Mammary epithelial cell (primary cell): ENCODE measurements at regions of chr17 and their contacts with region 1.

Region 1: GRCh38 chr17:31147507-31148202 is 52.9 kb downstream of the NF1 start:
- DNase-seq: no peak
- H3K4me3 ChIP-seq: no peak overlapping the region
- H3K27ac ChIP-seq: no peak overlapping the region
- H3K4me1 ChIP-seq: no peaks in the 10 kb centered on the region
- H3K27me3 ChIP-seq: no peaks in the 10 kb centered on the region
- CTCF ChIP-seq: no peak

Region 2: GRCh38 chr17:30942308-30943079 is 205.2 kb before region 1 on chr17:
- CTCF ChIA-PET with region 1: no interaction called
- dilution Hi-C with region 1: no loop called
- in situ Hi-C with region 1: no loop called
- intact Hi-C with region 1: no loop called
- DNase-seq: no peak
- H3K4me3 ChIP-seq: no peak overlapping the region
- H3K27ac ChIP-seq: no peak overlapping the region
- H3K4me1 ChIP-seq: no peaks in the 10 kb centered on the region
- H3K27me3 ChIP-seq: no peaks in the 10 kb centered on the region
- CTCF ChIP-seq: no peak

Region 3: GRCh38 chr17:31085563-31085962 is 62.1 kb before region 1 on chr17:
- CTCF ChIA-PET with region 1: no interaction called
- dilution Hi-C with region 1: loop called (anchors 10 kb)
- in situ Hi-C with region 1: no loop called
- intact Hi-C with region 1: no loop called
- DNase-seq: peak; percentile 55
- H3K4me3 ChIP-seq: no peak overlapping the region
- H3K27ac ChIP-seq: no peak overlapping the region
- H3K4me1 ChIP-seq: no peaks in the 10 kb centered on the region
- H3K27me3 ChIP-seq: no peaks in the 10 kb centered on the region
- CTCF ChIP-seq: no peak

Region 4: GRCh38 chr17:31112001-31112661 is 35.5 kb before region 1 on chr17:
- CTCF ChIA-PET with region 1: no interaction called
- dilution Hi-C with region 1: no loop called
- in situ Hi-C with region 1: no loop called
- intact Hi-C with region 1: loop called (anchors 5 kb)
- DNase-seq: peak; percentile 46
- H3K4me3 ChIP-seq: no peak overlapping the region
- H3K27ac ChIP-seq: no peak overlapping the region
- H3K4me1 ChIP-seq: peaks cover 6% of the 10 kb centered on the region
- H3K27me3 ChIP-seq: no peaks in the 10 kb centered on the region
- CTCF ChIP-seq: no peak

Region 5: DNA sequence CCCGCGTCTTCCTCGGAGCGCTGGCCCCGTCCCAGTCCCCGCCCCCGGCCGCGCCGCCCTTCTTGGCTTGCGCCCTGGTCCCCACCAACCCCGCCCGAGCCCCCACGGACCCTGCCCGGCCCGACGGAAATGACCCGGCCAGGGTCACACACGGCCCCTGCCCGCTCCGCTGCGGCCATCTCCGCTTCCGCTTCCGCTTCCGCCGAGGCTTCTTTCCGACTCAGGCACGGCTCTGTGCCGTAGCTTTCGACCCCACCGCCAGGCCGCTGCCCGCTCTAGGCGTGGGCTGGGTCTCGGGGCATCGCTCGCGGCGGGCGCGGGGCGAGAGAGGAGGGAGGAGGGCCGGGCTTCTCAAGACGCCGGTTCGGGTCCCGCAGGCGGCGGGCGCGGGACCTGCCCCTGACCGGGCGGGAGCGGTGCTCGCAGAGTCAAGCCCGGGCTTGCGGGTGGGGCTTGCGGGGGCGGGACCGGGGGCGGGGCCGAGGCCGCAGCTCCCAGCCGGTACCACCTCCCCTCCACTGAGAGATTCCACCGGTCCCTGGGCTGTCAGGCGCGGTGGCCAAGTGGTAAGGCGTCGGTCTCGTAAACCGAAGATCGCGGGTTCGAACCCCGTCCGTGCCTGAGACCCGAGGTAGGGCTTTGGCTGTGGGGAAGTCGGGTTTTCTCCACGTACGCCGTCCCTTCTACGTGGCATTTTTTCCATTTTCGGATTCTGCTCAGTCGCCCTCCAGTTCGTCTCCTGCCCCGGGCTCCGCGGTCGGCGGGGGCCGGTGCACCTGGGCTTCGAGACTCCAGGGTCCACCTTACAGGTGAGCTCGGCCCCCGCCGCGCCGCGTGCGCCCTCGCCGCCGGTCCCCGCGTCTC is 402.1 kb after region 1 on chr17:
- CTCF ChIA-PET with region 1: no interaction called
- dilution Hi-C with region 1: no loop called
- in situ Hi-C with region 1: no loop called
- intact Hi-C with region 1: no loop called
- DNase-seq: peak; percentile 89
- H3K4me3 ChIP-seq: peak overlapping the region; percentile 76 to 95 (median 88)
- H3K27ac ChIP-seq: peak overlapping the region; percentile 26
- H3K4me1 ChIP-seq: peaks cover 5% of the 10 kb centered on the region
- H3K27me3 ChIP-seq: no peaks in the 10 kb centered on the region
- CTCF ChIP-seq: no peak